ENCODE measurements at regions of chr10 and their contacts with region 1.

Region 1: DNA sequence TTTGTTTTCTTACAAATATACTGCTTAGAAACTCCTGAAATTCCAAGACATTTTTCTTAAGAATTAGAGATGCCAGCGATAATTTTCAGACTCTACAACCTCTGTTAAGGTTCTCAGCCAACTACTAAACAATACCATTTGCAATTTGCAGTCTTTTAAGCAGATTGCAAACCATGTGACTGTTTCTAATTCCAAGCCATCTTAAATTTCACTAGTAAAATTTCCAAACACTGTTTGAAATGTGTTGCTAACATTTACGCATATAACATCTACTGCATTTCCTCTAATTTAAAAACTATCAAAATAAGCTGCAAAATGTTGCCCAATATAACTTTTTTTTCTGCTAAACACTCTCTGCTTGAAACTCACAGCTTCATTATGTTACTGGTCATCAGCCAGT is 56.0 kb upstream of the MACROH2A2 start:
- DNase-seq: no peak
- ATAC-seq: no peak
- H3K4me3 ChIP-seq: no peak overlapping the region
- H3K27ac ChIP-seq: no peak overlapping the region
- H3K4me1 ChIP-seq: no peaks in the 10 kb centered on the region
- H3K27me3 ChIP-seq: peaks cover 19% of the 10 kb centered on the region
- CTCF ChIP-seq: no peak
- POLR2A ChIP-seq: no peak
- RAD21 ChIP-seq: no peak

Region 2: GRCh38 chr10:70052462-70053217 is 56.0 kb after region 1 on chr10 and contains the start of gene MACROH2A2:
- CTCF ChIA-PET with region 1: no interaction called
- POLR2A ChIA-PET with region 1: no interaction called
- dilution Hi-C with region 1: no loop called
- in situ Hi-C with region 1: no loop called
- intact Hi-C with region 1: loop called (anchors 5 kb)
- DNase-seq: peak; percentile 66
- ATAC-seq: peak; percentile 92
- H3K4me3 ChIP-seq: peak within 1 kb of the TSS; percentile 74
- H3K27ac ChIP-seq: peak within 1 kb of the TSS; percentile 70
- H3K4me1 ChIP-seq: no peaks in the 10 kb centered on the region
- H3K27me3 ChIP-seq: peaks cover 15% of the 10 kb centered on the region
- CTCF ChIP-seq: peak; percentile 44
- POLR2A ChIP-seq: no peak
- RAD21 ChIP-seq: 0 out of 2 replicates have a peak, but pooled peaks have one; percentile 17
- total RNA-seq, gene MACROH2A2: 16.7 and 17.4 TPM in 2 replicates

Region 3: GRCh38 chr10:70145666-70146488 is 149.3 kb after region 1 on chr10:
- CTCF ChIA-PET with region 1: no interaction called
- POLR2A ChIA-PET with region 1: no interaction called
- dilution Hi-C with region 1: no loop called
- in situ Hi-C with region 1: no loop called
- intact Hi-C with region 1: no loop called
- DNase-seq: peak; percentile 54
- ATAC-seq: peak; percentile 53
- H3K4me3 ChIP-seq: peak overlapping the region; percentile 49
- H3K27ac ChIP-seq: peak overlapping the region; percentile 64
- H3K4me1 ChIP-seq: peaks cover 11% of the 10 kb centered on the region
- H3K27me3 ChIP-seq: no peaks in the 10 kb centered on the region
- CTCF ChIP-seq: peak; percentile 58
- POLR2A ChIP-seq: no peak
- RAD21 ChIP-seq: peak; percentile 21; the same call in 1 of the 2 replicates

Measured in IMR-90 (cell line).